HCT116 (cell line): ENCODE measurements at regions of chr10 and their contacts with region 1.

Region 1: GRCh38 chr10:94402015-94402842 is at the start of gene TBC1D12:
- DNase-seq: peak; percentile 97
- ATAC-seq: peak; percentile 85
- H3K4me3 ChIP-seq: peak within 1 kb of the TSS; percentile 63 to 70
- H3K27ac ChIP-seq: peak within 1 kb of the TSS; percentile 80
- H3K4me1 ChIP-seq: peaks cover 9 to 22% of the 10 kb centered on the region in 2 experiments
- H3K27me3 ChIP-seq: no peaks in the 10 kb centered on the region
- CTCF ChIP-seq: no peak
- POLR2A ChIP-seq: peak; percentile 74
- RAD21 ChIP-seq: no peak
- total RNA-seq, gene TBC1D12: 7.1 TPM

Region 2: GRCh38 chr10:94362360-94363250 is 39.6 kb before region 1 on chr10 and contains the start of gene NOC3L:
- CTCF ChIA-PET with region 1: no interaction called
- POLR2A ChIA-PET with region 1: interaction called, 3 read pairs
- RAD21 ChIA-PET with region 1: no interaction called
- intact Hi-C with region 1: loop called (anchors 1 kb)
- DNase-seq: peak; percentile 93
- ATAC-seq: peak; percentile 99
- H3K4me3 ChIP-seq: peak within 1 kb of the TSS; percentile 82 to 93
- H3K27ac ChIP-seq: peak within 1 kb of the TSS; percentile 64
- H3K4me1 ChIP-seq: peaks cover 18 to 33% of the 10 kb centered on the region in 2 experiments
- H3K27me3 ChIP-seq: no peaks in the 10 kb centered on the region
- CTCF ChIP-seq: peak; percentile 65 to 98 (median 73)
- POLR2A ChIP-seq: peak; percentile 86
- RAD21 ChIP-seq: no peak; the same call in none of the 2 replicates
- total RNA-seq, gene NOC3L: 45.5 TPM